A549 (cell line): ENCODE measurements at regions of chr19 and their contacts with region 1.

Region 1: GRCh38 chr19:47436712-47437401 is 17.5 kb upstream of the MEIS3 start:
- DNase-seq: peak; percentile 82 to 86
- ATAC-seq: peak; percentile 84 to 95
- H3K4me3 ChIP-seq: no peak overlapping the region
- H3K27ac ChIP-seq: no peak overlapping the region
- H3K4me1 ChIP-seq: no peaks in the 10 kb centered on the region
- CTCF ChIP-seq: peak; percentile 92
- EP300 ChIP-seq: no peak
- POLR2A ChIP-seq: no peak
- RAD21 ChIP-seq: peak; percentile 96 to 99

Region 2: GRCh38 chr19:47391510-47392223 is 45.2 kb before region 1 on chr19:
- CTCF ChIA-PET with region 1: interaction called, 18 read pairs
- POLR2A ChIA-PET with region 1: no interaction called
- DNase-seq: peak; percentile 75 to 81
- ATAC-seq: peak; percentile 91 to 93
- H3K4me3 ChIP-seq: no peak overlapping the region
- H3K27ac ChIP-seq: peak overlapping the region in 1 of 2 experiments; percentile 42; a peak in 1 of 6 replicates
- H3K4me1 ChIP-seq: no peaks in the 10 kb centered on the region
- CTCF ChIP-seq: peak; percentile 98
- EP300 ChIP-seq: no peak
- POLR2A ChIP-seq: no peak
- RAD21 ChIP-seq: peak; percentile 89 to 91

Region 3: DNA sequence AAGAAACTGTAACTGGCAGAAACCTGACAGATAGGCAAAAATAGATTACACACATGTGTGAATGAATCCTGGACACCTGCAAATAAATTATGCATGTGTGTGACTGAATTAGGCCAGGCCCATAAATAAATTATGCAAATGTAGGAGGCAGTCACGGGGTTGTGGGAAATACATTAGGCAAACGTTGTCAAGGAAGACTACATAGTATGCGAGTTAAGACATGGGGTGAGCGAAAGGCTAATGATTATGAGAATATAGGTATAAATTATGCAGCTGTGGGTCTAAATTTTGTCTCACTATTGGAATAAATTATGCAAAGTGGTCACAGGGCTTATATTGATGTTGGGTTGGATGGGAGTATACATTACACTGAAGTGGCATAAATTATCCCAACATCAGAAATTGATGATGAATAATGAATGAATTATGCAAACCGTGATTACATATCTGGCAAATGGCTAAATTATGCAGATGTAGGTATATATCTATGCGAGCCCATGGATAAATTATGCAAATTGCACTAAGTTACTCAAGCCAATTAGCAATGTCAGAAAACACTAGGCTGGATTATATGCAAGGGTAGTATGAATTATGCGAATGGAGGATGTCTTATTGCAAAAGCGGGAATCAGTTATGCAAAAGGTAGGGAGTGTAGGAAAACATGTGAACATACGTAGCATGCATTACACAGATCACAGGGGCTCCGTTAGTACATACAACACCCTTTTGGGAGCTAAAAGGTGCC is 28.0 kb after region 1 on chr19:
- CTCF ChIA-PET with region 1: interaction called, 58 read pairs
- POLR2A ChIA-PET with region 1: no interaction called
- DNase-seq: no peak
- ATAC-seq: no peak
- H3K4me3 ChIP-seq: no peak overlapping the region
- H3K27ac ChIP-seq: no peak overlapping the region
- H3K4me1 ChIP-seq: peaks cover 7% of the 10 kb centered on the region; the same call in 1 of the 3 replicates
- CTCF ChIP-seq: no peak
- EP300 ChIP-seq: no peak
- POLR2A ChIP-seq: no peak
- RAD21 ChIP-seq: no peak

Region 4: DNA sequence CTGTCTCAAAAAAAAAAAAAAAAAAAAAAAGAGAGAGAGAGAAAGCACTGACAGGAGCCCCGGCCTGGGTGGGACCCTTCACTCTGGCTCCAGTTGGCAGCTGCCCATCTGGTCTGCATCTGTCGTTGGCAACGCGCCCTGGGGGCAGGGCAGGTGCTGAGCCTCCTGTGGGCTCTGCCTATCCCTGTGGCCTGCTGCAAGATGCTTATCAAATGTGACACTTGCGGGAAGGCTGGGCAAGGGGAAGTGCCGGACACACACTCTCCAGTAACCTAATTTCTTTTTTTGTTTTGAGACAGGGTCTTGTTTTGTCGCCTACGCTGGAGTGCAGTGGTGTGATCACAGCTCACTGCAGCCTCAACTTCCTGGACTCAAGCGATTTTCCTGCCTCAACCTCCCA is 57.9 kb after region 1 on chr19:
- CTCF ChIA-PET with region 1: interaction called, 52 read pairs
- POLR2A ChIA-PET with region 1: interaction called, 3 read pairs
- DNase-seq: no peak
- ATAC-seq: no peak
- H3K4me3 ChIP-seq: no peak overlapping the region
- H3K27ac ChIP-seq: no peak overlapping the region
- H3K4me1 ChIP-seq: no peaks in the 10 kb centered on the region
- CTCF ChIP-seq: no peak
- EP300 ChIP-seq: no peak
- POLR2A ChIP-seq: no peak
- RAD21 ChIP-seq: no peak

Region 5: DNA sequence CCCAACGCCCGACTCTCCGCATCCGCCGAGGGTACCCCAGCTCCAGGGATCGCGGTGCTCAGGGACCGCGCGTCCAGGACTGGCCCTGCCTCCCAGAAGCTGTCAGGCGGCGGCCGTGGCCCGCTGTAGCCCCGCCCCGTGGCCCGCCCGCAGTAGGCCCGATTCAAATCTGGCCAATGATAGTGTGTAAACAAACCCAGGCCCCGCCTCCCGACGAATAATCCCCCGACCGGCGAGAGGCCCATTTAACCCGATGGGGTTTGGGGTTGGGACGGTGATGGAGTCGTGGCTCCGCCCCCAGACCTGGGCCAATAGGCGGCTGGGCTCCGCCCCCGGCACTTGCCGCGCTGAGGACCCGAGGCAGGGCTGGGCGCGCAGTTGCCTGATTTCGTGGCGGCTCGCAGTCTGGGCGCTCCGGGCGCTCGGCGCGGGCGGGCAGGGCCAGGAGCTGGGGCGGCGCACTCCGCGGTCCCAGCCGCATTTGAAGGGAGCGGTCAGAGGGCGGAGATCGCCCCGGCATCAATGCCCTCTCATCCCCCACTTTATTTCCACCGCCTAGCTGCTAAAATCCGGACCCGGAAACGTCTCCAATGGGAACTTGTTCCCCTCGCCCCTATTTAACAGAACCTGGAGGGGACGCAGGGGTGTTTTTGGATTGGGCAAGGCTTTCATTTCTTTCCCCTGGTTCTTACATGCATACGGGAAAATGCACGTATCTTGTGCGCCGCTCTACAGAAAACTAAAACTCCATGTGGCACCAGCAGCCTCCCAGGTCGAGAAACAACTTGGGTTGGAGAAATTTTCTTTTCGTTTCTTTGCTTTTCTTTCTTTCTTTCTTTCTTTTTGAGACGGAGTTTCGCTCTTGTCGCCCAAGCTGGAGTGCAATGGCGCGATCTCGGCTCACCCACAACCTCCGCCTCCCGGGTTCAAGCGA is 163.7 kb after region 1 on chr19:
- CTCF ChIA-PET with region 1: interaction called, 23 read pairs
- POLR2A ChIA-PET with region 1: no interaction called
- DNase-seq: peak; percentile 99 to 100
- ATAC-seq: peak; percentile 90 to 93
- H3K4me3 ChIP-seq: peak overlapping the region; percentile 64
- H3K27ac ChIP-seq: peak overlapping the region; percentile 82 to 89
- H3K4me1 ChIP-seq: peaks cover 19% of the 10 kb centered on the region
- CTCF ChIP-seq: no peak
- EP300 ChIP-seq: no peak
- POLR2A ChIP-seq: peak; percentile 93
- RAD21 ChIP-seq: peak in 1 of 2 experiments; percentile 22; a peak in 3 of 5 replicates

Region 6: GRCh38 chr19:47687906-47688305 is 251.0 kb after region 1 on chr19:
- CTCF ChIA-PET with region 1: interaction called, 31 read pairs
- POLR2A ChIA-PET with region 1: no interaction called
- DNase-seq: no peak
- ATAC-seq: no peak
- H3K4me3 ChIP-seq: no peak overlapping the region
- H3K27ac ChIP-seq: no peak overlapping the region
- H3K4me1 ChIP-seq: no peaks in the 10 kb centered on the region
- CTCF ChIP-seq: no peak
- EP300 ChIP-seq: no peak
- POLR2A ChIP-seq: no peak
- RAD21 ChIP-seq: no peak

Region 7: GRCh38 chr19:47790398-47790814 is 353.5 kb after region 1 on chr19:
- CTCF ChIA-PET with region 1: interaction called, 11 read pairs
- POLR2A ChIA-PET with region 1: no interaction called
- DNase-seq: peak; percentile 85 to 94
- ATAC-seq: peak; percentile 91
- H3K4me3 ChIP-seq: no peak overlapping the region
- H3K27ac ChIP-seq: no peak overlapping the region
- H3K4me1 ChIP-seq: no peaks in the 10 kb centered on the region
- CTCF ChIP-seq: peak; percentile 86
- EP300 ChIP-seq: no peak
- POLR2A ChIP-seq: no peak
- RAD21 ChIP-seq: peak; percentile 28 to 46; a peak in 2 of 5 replicates